ENCODE measurements at regions of chr1 and their contacts with region 1.

Region 1: GRCh38 chr1:207404849-207405525 is 49.1 kb upstream of the CR2 start:
- DNase-seq: peak in 1 of 7 donors; percentile 12
- H3K4me3 ChIP-seq: no peak overlapping the region
- H3K27ac ChIP-seq: no peak overlapping the region
- H3K4me1 ChIP-seq: peaks cover 0 to 5% of the 10 kb centered on the region in 2 donors
- H3K27me3 ChIP-seq: no peaks in the 10 kb centered on the region
- CTCF ChIP-seq: peak; percentile 63 to 84 (median 78)
- POLR2A ChIP-seq: no peak

Region 2: DNA sequence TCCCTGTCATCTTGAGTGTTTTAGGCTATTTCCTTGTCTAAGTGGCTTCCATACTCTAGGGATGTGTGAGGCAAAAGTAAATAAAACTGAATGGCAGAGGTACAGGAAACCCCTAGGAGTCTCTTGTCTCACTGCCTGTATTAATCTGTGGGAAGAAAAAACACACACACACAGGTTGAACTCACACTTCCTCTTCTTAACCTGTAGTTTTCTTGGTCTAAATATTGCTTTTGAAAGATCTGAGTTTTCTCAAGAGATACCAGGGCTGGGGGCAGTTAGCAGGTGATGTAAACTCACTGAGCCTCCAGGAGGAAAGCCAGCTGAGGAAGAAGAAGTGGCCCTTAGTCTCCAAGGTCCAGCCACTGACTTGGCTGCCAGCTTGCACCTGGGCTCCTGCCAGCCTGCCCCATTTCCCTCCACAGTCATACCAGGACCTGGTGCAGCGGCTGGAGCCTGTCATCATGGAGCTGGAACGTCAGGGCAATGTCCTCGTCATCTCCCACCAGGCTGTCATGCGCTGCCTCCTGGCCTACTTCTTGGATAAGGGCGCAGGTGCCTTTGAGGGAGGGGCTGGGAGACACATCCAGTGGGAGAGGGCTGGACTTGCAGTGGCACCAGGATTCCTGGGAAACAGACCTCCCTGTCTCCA is 335.0 kb before region 1 on chr1:
- intact Hi-C with region 1: loop called in 1 of 2 experiments (anchors 5 kb)
- DNase-seq: no peak
- H3K4me3 ChIP-seq: no peak overlapping the region
- H3K27ac ChIP-seq: no peak overlapping the region
- H3K4me1 ChIP-seq: no peaks in the 10 kb centered on the region
- H3K27me3 ChIP-seq: no peaks in the 10 kb centered on the region
- CTCF ChIP-seq: no peak
- POLR2A ChIP-seq: no peak

Region 3: DNA sequence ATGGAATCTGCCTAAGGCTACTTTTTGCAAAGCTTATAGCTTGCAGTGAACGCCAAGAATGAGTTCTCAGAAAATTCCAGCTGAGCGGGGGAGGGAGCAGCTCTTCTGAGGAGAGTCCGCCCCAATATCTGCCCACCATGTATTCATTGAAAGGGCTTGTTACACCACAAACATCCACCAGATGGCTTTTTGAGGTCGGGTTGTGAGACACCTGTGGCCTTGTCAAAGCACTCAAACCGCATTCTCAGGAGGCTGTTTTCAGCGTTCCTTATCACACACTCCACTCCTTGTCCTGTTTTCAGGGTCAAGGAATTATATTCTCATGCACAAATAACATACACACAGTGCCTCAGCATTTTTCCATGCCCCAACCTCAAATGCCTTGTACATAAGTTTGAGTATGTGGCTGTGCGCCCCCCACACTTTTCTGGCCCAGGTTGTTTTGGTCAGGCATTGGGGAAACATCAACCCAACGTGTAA is 320.2 kb before region 1 on chr1:
- intact Hi-C with region 1: loop called in 1 of 2 experiments (anchors 5 kb)
- DNase-seq: peak; percentile 39 to 72 (median 56)
- H3K4me3 ChIP-seq: no peak overlapping the region
- H3K27ac ChIP-seq: no peak overlapping the region
- H3K4me1 ChIP-seq: peaks cover 0 to 10% of the 10 kb centered on the region in 2 donors
- H3K27me3 ChIP-seq: no peaks in the 10 kb centered on the region
- CTCF ChIP-seq: peak; percentile 39 to 68 (median 66)
- POLR2A ChIP-seq: no peak

Region 4: DNA sequence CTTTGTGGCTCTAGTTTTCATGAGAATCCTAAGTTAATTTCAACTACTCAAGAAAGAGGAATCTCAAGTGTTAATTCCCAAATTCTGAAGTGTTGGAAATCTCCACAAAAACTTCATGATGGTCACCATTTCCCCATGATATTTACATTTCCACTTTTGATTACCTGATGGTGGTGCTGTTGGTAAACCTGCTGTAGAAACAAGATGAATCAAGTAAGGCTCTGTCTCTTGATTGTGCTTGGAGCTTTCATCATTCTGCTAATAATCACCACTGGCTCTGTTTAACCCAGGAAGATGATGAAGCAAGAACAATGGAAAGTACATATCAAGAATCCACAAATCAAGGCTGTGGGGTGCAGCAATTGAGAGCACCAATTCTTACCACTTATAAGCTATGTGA is 223.1 kb before region 1 on chr1:
- intact Hi-C with region 1: loop called in 1 of 2 experiments (anchors 10 kb)
- DNase-seq: peak in 1 of 7 donors; percentile 7
- H3K4me3 ChIP-seq: no peak overlapping the region
- H3K27ac ChIP-seq: no peak overlapping the region
- H3K4me1 ChIP-seq: no peaks in the 10 kb centered on the region
- H3K27me3 ChIP-seq: no peaks in the 10 kb centered on the region
- CTCF ChIP-seq: peak in 5 of 6 experiments; percentile 40 to 60 (median 48)
- POLR2A ChIP-seq: no peak

Region 5: DNA sequence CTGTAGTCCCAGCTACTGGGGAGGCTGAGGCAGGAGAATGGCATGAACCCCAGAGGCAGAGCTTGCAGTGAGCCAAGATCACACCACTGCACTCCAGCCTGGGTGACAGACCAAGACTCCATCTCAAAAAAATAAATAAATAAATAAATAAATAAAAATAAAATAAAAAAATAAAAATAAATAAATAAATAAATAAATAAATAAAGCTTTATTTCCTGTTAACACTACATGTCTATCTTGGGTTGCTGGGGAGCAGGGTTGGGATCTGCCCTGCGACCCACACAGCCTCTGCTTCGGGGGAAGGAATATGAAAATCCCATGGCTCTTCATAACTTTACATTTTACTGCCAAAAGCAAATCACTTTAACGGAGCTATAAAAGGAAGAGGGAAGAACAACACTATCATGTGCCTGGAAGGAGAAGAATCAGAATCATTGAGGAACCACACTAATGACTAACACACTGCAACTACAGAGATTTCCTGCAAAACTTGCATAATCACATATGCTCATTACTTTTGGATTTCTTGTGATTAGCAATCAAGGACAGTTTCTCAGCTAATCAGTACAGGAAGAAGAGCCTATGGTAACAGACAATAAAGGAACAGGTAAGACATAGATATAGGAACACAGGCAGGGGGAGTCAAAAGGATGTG is 156.3 kb before region 1 on chr1:
- intact Hi-C with region 1: no loop called
- DNase-seq: no peak
- H3K4me3 ChIP-seq: no peak overlapping the region
- H3K27ac ChIP-seq: no peak overlapping the region
- H3K4me1 ChIP-seq: peaks cover 0 to 7% of the 10 kb centered on the region in 2 donors
- H3K27me3 ChIP-seq: no peaks in the 10 kb centered on the region
- CTCF ChIP-seq: no peak
- POLR2A ChIP-seq: no peak

Measured in adrenal gland (tissue), 19 donors.